ENCODE measurements at regions of chr18 and their contacts with region 1.

Region 1: DNA sequence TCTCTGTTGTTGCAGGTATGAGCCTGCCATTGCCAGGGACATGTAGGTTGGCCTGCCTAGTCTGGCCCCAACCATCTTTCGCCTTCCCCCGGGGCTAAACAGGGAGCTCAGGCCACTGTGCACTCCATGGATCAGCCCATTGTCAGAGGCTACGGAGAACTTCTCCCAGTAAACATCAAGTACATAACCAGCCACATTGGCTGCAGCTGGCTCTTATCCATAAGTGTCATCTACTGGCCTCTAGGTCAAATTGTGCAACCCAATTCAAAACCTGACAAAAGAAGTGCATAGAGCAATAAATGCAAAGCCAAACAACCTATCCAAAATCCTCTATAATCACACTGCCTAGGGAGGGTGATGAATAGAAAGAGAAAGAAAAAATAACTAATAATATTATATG is 418.1 kb upstream of the DCC start:
- DNase-seq: no peak
- H3K4me3 ChIP-seq: no peak overlapping the region
- H3K4me3 Mint-ChIP-seq: no peak overlapping the region
- H3K27ac ChIP-seq: no peak overlapping the region
- H3K27ac Mint-ChIP-seq: no peak overlapping the region
- H3K4me1 ChIP-seq: no peaks in the 10 kb centered on the region
- H3K4me1 Mint-ChIP-seq: no peaks in the 10 kb centered on the region
- H3K27me3 ChIP-seq: no peaks in the 10 kb centered on the region
- H3K27me3 Mint-ChIP-seq: peaks cover 0 to 1% (median 0%) of the 10 kb centered on the region in 3 donors
- CTCF ChIP-seq: no peak

Region 2: GRCh38 chr18:51668101-51668500 is 253.8 kb before region 1 on chr18:
- intact Hi-C with region 1: no loop called
- DNase-seq: peak in 1 of 3 donors; percentile 4
- H3K4me3 ChIP-seq: no peak overlapping the region
- H3K4me3 Mint-ChIP-seq: no peak overlapping the region
- H3K27ac ChIP-seq: no peak overlapping the region
- H3K27ac Mint-ChIP-seq: no peak overlapping the region
- H3K4me1 ChIP-seq: no peaks in the 10 kb centered on the region
- H3K4me1 Mint-ChIP-seq: peaks cover 2% of the 10 kb centered on the region
- H3K27me3 ChIP-seq: no peaks in the 10 kb centered on the region
- H3K27me3 Mint-ChIP-seq: peaks cover 2 to 3% (median 3%) of the 10 kb centered on the region in 3 donors
- CTCF ChIP-seq: peak; percentile 68

Region 3: GRCh38 chr18:51867767-51868166 is 54.1 kb before region 1 on chr18:
- intact Hi-C with region 1: loop called in 1 of 2 experiments (anchors 10 kb)
- DNase-seq: no peak
- H3K4me3 ChIP-seq: no peak overlapping the region
- H3K4me3 Mint-ChIP-seq: no peak overlapping the region
- H3K27ac ChIP-seq: no peak overlapping the region
- H3K27ac Mint-ChIP-seq: no peak overlapping the region
- H3K4me1 ChIP-seq: no peaks in the 10 kb centered on the region
- H3K4me1 Mint-ChIP-seq: no peaks in the 10 kb centered on the region
- H3K27me3 ChIP-seq: no peaks in the 10 kb centered on the region
- H3K27me3 Mint-ChIP-seq: no peaks in the 10 kb centered on the region
- CTCF ChIP-seq: no peak

Region 4: GRCh38 chr18:51980101-51980500 is 58.2 kb after region 1 on chr18:
- intact Hi-C with region 1: no loop called
- DNase-seq: no peak
- H3K4me3 ChIP-seq: no peak overlapping the region
- H3K4me3 Mint-ChIP-seq: no peak overlapping the region
- H3K27ac ChIP-seq: no peak overlapping the region
- H3K27ac Mint-ChIP-seq: no peak overlapping the region
- H3K4me1 ChIP-seq: no peaks in the 10 kb centered on the region
- H3K4me1 Mint-ChIP-seq: no peaks in the 10 kb centered on the region
- H3K27me3 ChIP-seq: no peaks in the 10 kb centered on the region
- H3K27me3 Mint-ChIP-seq: no peaks in the 10 kb centered on the region
- CTCF ChIP-seq: no peak